ENCODE measurements at regions of chr19 and their contacts with region 1.

Region 1: GRCh38 chr19:13060964-13061927 is 41.4 kb downstream of the LYL1 start:
- DNase-seq: peak; percentile 79
- H3K4me3 Mint-ChIP-seq: peak overlapping the region; percentile 58
- H3K27ac Mint-ChIP-seq: no peak overlapping the region
- H3K4me1 Mint-ChIP-seq: peaks cover 9% of the 10 kb centered on the region
- H3K27me3 Mint-ChIP-seq: peaks cover 26% of the 10 kb centered on the region

Region 2: GRCh38 chr19:12983542-12984142 is 77.6 kb before region 1 on chr19:
- CTCF ChIA-PET with region 1: interaction called, 22 read pairs
- POLR2A ChIA-PET with region 1: no interaction called
- DNase-seq: peak; percentile 73
- H3K4me3 Mint-ChIP-seq: no peak overlapping the region
- H3K27ac Mint-ChIP-seq: no peak overlapping the region
- H3K4me1 Mint-ChIP-seq: no peaks in the 10 kb centered on the region
- H3K27me3 Mint-ChIP-seq: no peaks in the 10 kb centered on the region

Region 3: GRCh38 chr19:13079542-13079986 is 18.3 kb after region 1 on chr19:
- CTCF ChIA-PET with region 1: interaction called, 17 read pairs
- POLR2A ChIA-PET with region 1: no interaction called
- DNase-seq: no peak
- H3K4me3 Mint-ChIP-seq: no peak overlapping the region
- H3K27ac Mint-ChIP-seq: no peak overlapping the region
- H3K4me1 Mint-ChIP-seq: no peaks in the 10 kb centered on the region
- H3K27me3 Mint-ChIP-seq: peaks cover 3% of the 10 kb centered on the region

Region 4: GRCh38 chr19:13093407-13094105 is 32.3 kb after region 1 on chr19:
- CTCF ChIA-PET with region 1: interaction called, 29 read pairs
- POLR2A ChIA-PET with region 1: no interaction called
- DNase-seq: peak; percentile 84
- H3K4me3 Mint-ChIP-seq: no peak overlapping the region
- H3K27ac Mint-ChIP-seq: no peak overlapping the region
- H3K4me1 Mint-ChIP-seq: peaks cover 23% of the 10 kb centered on the region
- H3K27me3 Mint-ChIP-seq: peaks cover 38% of the 10 kb centered on the region